Common myeloid progenitor, CD34-positive (primary cell): ENCODE measurements at regions of chr1 and their contacts with region 1.

Region 1: GRCh38 chr1:32773018-32773763 is 44.0 kb downstream of the YARS1 start:
- DNase-seq: peak; percentile 71 to 79 (median 72)
- H3K4me3 ChIP-seq: no peak overlapping the region
- H3K27ac ChIP-seq: no peak overlapping the region
- H3K4me1 ChIP-seq: peaks cover 0 to 27% (median 18%) of the 10 kb centered on the region in 4 experiments
- H3K27me3 ChIP-seq: no peaks in the 10 kb centered on the region

Region 2: DNA sequence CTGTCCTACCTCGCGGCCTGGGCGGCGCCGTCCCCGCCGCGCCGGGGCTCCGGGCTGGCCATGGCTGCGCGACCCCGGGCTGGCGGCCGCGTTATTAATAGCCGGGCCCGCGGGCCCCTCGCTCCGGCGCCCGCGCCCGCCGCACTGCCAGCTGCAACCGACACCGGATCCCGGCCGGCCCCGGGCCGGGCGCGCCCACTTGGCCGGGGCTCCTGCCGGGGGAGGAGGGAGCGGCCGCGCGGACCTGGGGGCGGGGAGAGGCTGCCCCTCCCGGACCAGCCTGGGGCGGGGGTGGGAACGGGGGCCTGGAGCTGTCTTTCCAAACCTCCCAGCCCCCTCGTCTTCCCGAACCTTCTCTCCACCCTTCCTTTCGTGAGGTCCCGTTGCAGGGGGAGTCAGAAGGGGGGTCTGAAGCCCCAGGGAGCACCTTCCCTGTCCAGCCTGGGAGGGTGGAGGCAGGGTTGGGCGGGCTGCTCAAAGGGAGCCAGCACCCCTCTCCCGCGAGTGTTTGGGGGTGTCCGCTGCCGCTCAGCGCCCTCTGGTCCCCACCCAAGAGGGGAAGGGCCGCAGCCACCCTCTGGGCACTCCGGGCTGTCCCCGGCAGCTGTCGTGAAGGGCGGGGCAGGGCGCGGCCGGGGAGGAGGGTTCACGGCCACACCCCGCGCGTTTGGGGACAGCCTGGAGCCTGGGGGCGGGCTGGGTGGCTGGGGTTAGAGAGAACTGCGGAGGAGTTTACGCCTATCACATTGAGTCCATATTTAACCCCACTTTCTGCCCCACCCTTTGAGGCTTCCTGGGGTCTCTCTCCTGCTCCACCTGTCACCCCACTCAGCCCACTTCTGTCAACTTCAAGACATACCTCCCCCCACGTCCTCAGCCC is 70.4 kb before region 1 on chr1 and contains the start of gene SYNC:
- CTCF ChIA-PET with region 1: interaction called, 44 read pairs
- POLR2A ChIA-PET with region 1: no interaction called
- DNase-seq: peak in 2 of 3 donors; percentile 16 to 31
- H3K4me3 ChIP-seq: peak within 1 kb of the TSS; percentile 24 to 81 (median 63)
- H3K27ac ChIP-seq: no peak within 1 kb of the TSS
- H3K4me1 ChIP-seq: peaks cover 0 to 26% (median 21%) of the 10 kb centered on the region in 4 experiments
- H3K27me3 ChIP-seq: peaks cover 0 to 14% (median 4%) of the 10 kb centered on the region in 5 experiments

Region 3: GRCh38 chr1:32741413-32742198 is 31.6 kb before region 1 on chr1:
- CTCF ChIA-PET with region 1: interaction called, 33 read pairs
- POLR2A ChIA-PET with region 1: no interaction called
- DNase-seq: peak in 2 of 3 donors; percentile 50 to 60
- H3K4me3 ChIP-seq: peak overlapping the region; percentile 59 to 83 (median 75)
- H3K27ac ChIP-seq: peak overlapping the region in 1 of 2 experiments; percentile 68
- H3K4me1 ChIP-seq: peaks cover 0 to 28% (median 24%) of the 10 kb centered on the region in 4 experiments
- H3K27me3 ChIP-seq: no peaks in the 10 kb centered on the region

Region 4: DNA sequence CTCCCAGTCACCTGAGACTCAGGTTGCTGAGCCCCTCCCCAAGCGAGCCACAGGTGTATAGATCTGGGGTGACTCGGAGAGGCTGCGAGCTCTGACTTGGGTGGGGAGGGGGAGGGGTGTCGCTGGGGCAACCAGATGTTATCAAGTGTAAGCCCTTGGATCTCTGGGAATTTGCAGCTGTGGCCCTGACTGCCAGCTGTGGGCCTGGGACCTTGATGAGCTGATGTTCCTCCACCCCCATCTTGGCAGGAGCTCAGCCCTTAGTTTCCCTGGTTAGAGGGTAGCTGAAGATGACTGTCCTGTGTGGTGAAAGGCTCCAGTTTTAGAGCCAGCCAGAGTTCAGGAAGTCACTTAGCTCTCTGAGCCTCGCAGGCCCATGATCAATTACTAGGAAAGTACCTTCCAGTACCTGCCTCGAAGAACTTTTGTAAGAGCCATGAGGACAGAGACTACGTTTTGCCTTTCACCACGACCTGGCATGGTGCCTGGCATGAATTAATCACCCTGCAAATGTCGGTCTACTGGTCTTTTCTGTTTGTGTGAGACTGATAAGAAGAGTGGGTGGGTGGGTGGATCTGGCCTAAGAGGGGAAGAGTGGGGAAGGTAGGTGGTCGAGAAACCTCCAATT is 11.8 kb before region 1 on chr1:
- CTCF ChIA-PET with region 1: interaction called, 31 read pairs
- POLR2A ChIA-PET with region 1: no interaction called
- DNase-seq: peak; percentile 61 to 86 (median 85)
- H3K4me3 ChIP-seq: peak overlapping the region in 1 of 7 experiments; percentile 7
- H3K27ac ChIP-seq: peak overlapping the region in 1 of 2 experiments; percentile 27
- H3K4me1 ChIP-seq: peaks cover 0 to 44% (median 29%) of the 10 kb centered on the region in 4 experiments
- H3K27me3 ChIP-seq: no peaks in the 10 kb centered on the region